K562 (cell line): ENCODE measurements at regions of chrX and their contacts with region 1.

Region 1: GRCh38 chrX:153032397-153033118 is 23.7 kb upstream of the PNMA3 start:
- DNase-seq: peak; percentile 74 to 77 (median 75)
- ATAC-seq: peak; percentile 95
- H3K4me3 ChIP-seq: no peak overlapping the region
- H3K27ac ChIP-seq: no peak overlapping the region
- H3K4me1 ChIP-seq: peaks cover 0 to 10% of the 10 kb centered on the region in 2 experiments; a peak in 2 of 5 replicates
- H3K27me3 ChIP-seq: peaks cover 0 to 6% of the 10 kb centered on the region in 2 experiments; a peak in 2 of 5 replicates
- CTCF ChIP-seq: peak; percentile 84 to 87 (median 86)
- EP300 ChIP-seq: no peak
- POLR2A ChIP-seq: no peak
- RAD21 ChIP-seq: peak; percentile 96 to 98

Region 2: GRCh38 chrX:152915527-152916241 is 116.9 kb before region 1 on chrX:
- CTCF ChIA-PET with region 1: no interaction called
- POLR2A ChIA-PET with region 1: no interaction called
- in situ Hi-C with region 1: no loop called
- intact Hi-C with region 1: no loop called
- DNase-seq: peak; percentile 57 to 73 (median 69)
- ATAC-seq: peak; percentile 91
- H3K4me3 ChIP-seq: no peak overlapping the region
- H3K27ac ChIP-seq: no peak overlapping the region
- H3K4me1 ChIP-seq: peaks cover 0 to 14% of the 10 kb centered on the region in 2 experiments; a peak in 2 of 5 replicates
- H3K27me3 ChIP-seq: peaks cover 0 to 20% of the 10 kb centered on the region in 2 experiments; a peak in 2 of 5 replicates
- CTCF ChIP-seq: peak; percentile 91 to 96 (median 94)
- EP300 ChIP-seq: no peak
- POLR2A ChIP-seq: no peak
- RAD21 ChIP-seq: peak; percentile 41 to 62

Region 3: DNA sequence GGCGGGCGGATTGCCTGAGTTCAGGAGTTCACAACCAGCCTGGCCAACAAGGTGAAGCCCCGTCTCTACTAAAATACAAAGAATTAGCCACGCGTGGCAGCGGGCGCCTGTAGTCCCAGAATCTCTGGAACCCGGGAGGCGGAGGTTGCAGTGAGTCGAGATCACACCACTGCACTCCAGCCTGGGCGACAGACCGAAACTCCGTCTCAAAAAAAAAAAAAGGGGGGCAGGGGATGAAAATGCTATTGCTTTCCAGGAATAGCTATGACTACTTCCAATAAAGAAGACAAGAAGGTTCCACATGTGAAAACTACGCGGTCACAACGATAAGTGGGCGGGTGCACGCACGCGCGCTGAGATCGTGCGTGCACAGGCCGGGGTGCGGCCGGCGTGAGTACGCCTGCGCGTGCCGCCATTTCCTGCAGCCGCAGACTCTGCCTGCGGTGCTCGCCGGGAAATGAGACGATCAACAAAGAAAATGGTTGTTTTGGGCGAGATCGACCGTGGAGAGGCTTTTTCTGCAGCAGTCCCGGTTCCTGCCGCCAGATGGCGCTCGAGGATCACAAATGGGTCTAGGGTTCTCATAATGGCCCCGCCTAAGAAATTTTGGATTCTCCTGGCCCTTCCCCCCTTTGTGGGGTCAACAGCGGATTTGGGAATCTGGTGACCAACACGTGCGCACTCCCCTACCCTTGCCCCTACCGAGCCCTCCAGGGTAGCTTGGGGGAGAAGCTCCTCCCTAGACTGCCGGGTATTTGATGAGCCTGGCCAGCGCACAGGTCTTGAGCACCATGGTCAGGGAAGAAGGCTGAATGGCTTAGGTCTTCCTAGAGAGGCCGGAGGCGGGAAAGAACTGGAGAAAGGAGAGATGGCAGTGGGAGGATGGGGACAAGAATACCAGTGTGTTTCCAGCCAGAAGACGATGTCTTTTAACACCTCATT is 73.8 kb before region 1 on chrX:
- CTCF ChIA-PET with region 1: interaction called, 3 read pairs
- POLR2A ChIA-PET with region 1: interaction called, 3 read pairs
- in situ Hi-C with region 1: no loop called
- intact Hi-C with region 1: loop called (anchors 5 kb)
- DNase-seq: peak; percentile 85 to 93 (median 88)
- ATAC-seq: peak; percentile 99
- H3K4me3 ChIP-seq: peak overlapping the region; percentile 3; the same call in 1 of the 2 replicates
- H3K27ac ChIP-seq: peak overlapping the region; percentile 59
- H3K4me1 ChIP-seq: peaks cover 11 to 13% of the 10 kb centered on the region in 2 experiments; a peak in 4 of 5 replicates
- H3K27me3 ChIP-seq: no peaks in the 10 kb centered on the region
- CTCF ChIP-seq: peak; percentile 77 to 94 (median 91)
- EP300 ChIP-seq: peak; percentile 35; the same call in 1 of the 2 replicates
- POLR2A ChIP-seq: peak; percentile 51; the same call in 1 of the 2 replicates
- RAD21 ChIP-seq: peak; percentile 84 to 95

Region 4: GRCh38 chrX:153438531-153438930 is 406.0 kb after region 1 on chrX:
- CTCF ChIA-PET with region 1: interaction called, 10 read pairs
- POLR2A ChIA-PET with region 1: no interaction called
- in situ Hi-C with region 1: no loop called
- intact Hi-C with region 1: loop called (anchors 10 kb)
- DNase-seq: peak in 1 of 4 experiments; percentile 52
- ATAC-seq: peak; percentile 78
- H3K4me3 ChIP-seq: no peak overlapping the region
- H3K27ac ChIP-seq: no peak overlapping the region
- H3K4me1 ChIP-seq: peaks cover 0 to 6% of the 10 kb centered on the region in 2 experiments; a peak in 2 of 5 replicates
- H3K27me3 ChIP-seq: peaks cover 7 to 20% of the 10 kb centered on the region in 2 experiments; a peak in 4 of 5 replicates
- CTCF ChIP-seq: peak; percentile 49 to 58 (median 49)
- EP300 ChIP-seq: no peak
- POLR2A ChIP-seq: no peak
- RAD21 ChIP-seq: peak; percentile 54 to 78